Adrenal gland (tissue), 19 donors: ENCODE measurements at regions of chr11 and their contacts with region 1.

Region 1: GRCh38 chr11:117134431-117134830 is 9.7 kb upstream of the PAFAH1B2 start:
- DNase-seq: no peak
- H3K4me3 ChIP-seq: no peak overlapping the region
- H3K27ac ChIP-seq: no peak overlapping the region
- H3K4me1 ChIP-seq: no peaks in the 10 kb centered on the region
- H3K27me3 ChIP-seq: no peaks in the 10 kb centered on the region
- CTCF ChIP-seq: no peak
- POLR2A ChIP-seq: no peak

Region 2: GRCh38 chr11:117192081-117192875 is 57.8 kb after region 1 on chr11:
- intact Hi-C with region 1: no loop called
- DNase-seq: peak in 1 of 7 donors; percentile 9
- H3K4me3 ChIP-seq: no peak overlapping the region
- H3K27ac ChIP-seq: no peak overlapping the region
- H3K4me1 ChIP-seq: no peaks in the 10 kb centered on the region
- H3K27me3 ChIP-seq: no peaks in the 10 kb centered on the region
- CTCF ChIP-seq: no peak
- POLR2A ChIP-seq: no peak

Region 3: GRCh38 chr11:117205211-117205818 is 70.9 kb after region 1 on chr11:
- intact Hi-C with region 1: loop called in 1 of 2 experiments (anchors 5 kb)
- DNase-seq: peak in 6 of 7 donors; percentile 60 to 83 (median 77)
- H3K4me3 ChIP-seq: no peak overlapping the region
- H3K27ac ChIP-seq: peak overlapping the region; percentile 57 to 92 (median 79)
- H3K4me1 ChIP-seq: peaks cover 16 to 22% of the 10 kb centered on the region in 2 donors
- H3K27me3 ChIP-seq: no peaks in the 10 kb centered on the region
- CTCF ChIP-seq: no peak
- POLR2A ChIP-seq: peak in 1 of 2 donors; percentile 16

Region 4: DNA sequence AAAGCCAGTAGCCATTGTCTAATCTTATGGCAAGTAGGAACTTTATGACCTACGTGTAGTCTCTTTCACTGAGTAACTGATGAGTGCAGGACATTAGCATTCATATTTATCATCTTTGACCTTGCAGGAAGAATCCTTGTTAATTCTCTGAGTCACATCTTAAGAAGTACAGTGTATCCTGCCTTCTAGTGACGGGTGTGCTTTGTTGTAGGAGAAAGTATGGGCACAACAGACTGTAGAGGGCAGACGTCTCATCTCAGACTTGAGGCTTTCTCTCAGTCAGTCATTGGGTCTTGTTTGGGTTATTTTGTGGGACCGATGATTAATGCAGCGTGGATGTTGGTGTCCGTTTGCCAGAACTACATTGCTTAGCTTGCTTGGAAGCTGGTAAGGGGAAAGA is 104.9 kb after region 1 on chr11:
- intact Hi-C with region 1: no loop called
- DNase-seq: peak in 2 of 7 donors; percentile 43 to 47
- H3K4me3 ChIP-seq: no peak overlapping the region
- H3K27ac ChIP-seq: peak overlapping the region in 2 of 5 donors; percentile 22 to 35
- H3K4me1 ChIP-seq: peaks cover 7 to 10% of the 10 kb centered on the region in 2 donors
- H3K27me3 ChIP-seq: no peaks in the 10 kb centered on the region
- CTCF ChIP-seq: peak in 4 of 6 experiments; percentile 16 to 27 (median 20)
- POLR2A ChIP-seq: peak in 1 of 2 donors; percentile 22

Region 5: DNA sequence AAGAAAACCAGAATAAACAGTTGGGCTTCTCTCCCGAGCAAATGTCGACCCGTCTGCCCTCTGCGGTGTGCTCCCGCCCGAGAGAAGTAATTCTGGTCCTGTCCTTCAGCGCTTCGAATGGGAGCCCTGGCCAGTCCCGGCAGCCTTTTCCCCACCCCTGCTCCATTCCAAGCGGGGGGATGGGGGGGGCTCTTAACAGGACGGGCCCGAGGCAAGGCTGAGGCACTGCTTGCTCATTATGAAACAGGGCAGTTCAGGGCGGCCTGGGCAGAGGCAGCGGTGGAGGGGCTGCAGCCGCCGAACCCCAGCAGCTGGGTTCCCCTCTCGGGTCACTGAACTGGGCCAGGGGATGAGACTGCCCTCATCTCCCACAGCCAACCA is 165.8 kb after region 1 on chr11:
- intact Hi-C with region 1: no loop called
- DNase-seq: peak; percentile 46 to 82 (median 71)
- H3K4me3 ChIP-seq: peak overlapping the region in 1 of 4 donors; percentile 22
- H3K27ac ChIP-seq: peak overlapping the region in 2 of 5 donors; percentile 25 to 39
- H3K4me1 ChIP-seq: peaks cover 7 to 20% of the 10 kb centered on the region in 2 donors
- H3K27me3 ChIP-seq: no peaks in the 10 kb centered on the region
- CTCF ChIP-seq: no peak
- POLR2A ChIP-seq: no peak